Panc1 (cell line): ENCODE measurements at regions of chr15 and their contacts with region 1.

Region 1: DNA sequence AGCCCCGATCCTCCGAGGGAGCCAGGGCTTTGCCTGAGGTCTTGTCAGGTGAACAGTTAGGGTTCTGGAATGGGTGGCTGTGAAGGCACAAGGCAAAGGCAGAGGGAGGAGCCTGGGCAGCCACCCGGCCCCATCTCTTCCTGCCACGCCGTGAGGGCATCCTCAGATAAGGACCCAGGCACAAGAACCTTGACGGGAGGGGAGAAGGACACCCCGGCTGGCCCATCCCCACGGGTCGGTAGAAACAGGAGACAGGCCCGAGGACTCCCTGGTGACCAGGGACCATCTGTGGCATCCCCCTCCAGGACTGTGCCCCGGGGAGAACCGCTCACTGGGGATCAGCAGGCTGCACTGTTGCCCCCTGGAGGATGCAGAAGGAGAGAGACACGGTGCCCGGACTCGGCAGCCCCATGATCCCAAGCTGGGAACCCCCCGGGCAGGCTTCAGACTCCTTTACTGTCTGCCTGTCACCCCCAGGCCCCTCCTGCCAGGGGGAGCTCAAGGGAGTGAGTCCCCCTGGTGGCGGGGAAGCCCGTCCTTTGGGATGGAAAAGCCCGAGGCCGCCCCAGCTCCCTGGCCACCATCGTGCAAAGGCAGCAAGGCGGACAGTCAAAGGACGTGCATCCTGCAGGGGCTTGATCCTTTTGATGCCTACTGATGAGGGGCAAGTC is 12.3 kb upstream of the PCSK6 start:
- DNase-seq: no peak
- ATAC-seq: peak; percentile 94
- H3K4me3 ChIP-seq: peak overlapping the region in 1 of 2 experiments; percentile 5; a peak in 1 of 4 replicates
- H3K27ac ChIP-seq: no peak overlapping the region
- H3K4me1 ChIP-seq: no peaks in the 10 kb centered on the region
- H3K27me3 ChIP-seq: no peaks in the 10 kb centered on the region
- CTCF ChIP-seq: peak; percentile 90

Region 2: DNA sequence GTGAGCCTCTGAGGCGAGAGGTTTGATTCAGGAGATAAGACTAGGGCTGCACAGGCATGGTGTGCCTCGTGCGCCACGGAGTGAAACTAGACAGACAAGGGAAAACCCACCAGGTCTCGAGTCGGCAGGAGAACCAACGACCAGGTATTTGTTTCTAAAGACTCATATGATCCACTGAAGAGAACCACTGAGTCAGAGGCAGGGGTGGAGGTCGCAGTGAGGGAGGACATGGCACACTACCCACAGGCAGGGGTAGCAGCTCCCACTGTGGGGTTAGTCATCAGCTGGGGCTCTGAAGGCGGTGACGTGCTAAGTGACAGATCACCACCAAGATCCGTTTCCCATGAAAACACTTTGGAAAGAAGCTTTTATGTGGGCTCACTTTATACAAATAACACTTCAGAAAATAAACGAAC is 295.7 kb before region 1 on chr15:
- CTCF ChIA-PET with region 1: no interaction called
- POLR2A ChIA-PET with region 1: no interaction called
- in situ Hi-C with region 1: no loop called
- intact Hi-C with region 1: no loop called
- DNase-seq: no peak
- ATAC-seq: no peak
- H3K4me3 ChIP-seq: no peak overlapping the region
- H3K27ac ChIP-seq: peak overlapping the region; percentile 63
- H3K4me1 ChIP-seq: peaks cover 69% of the 10 kb centered on the region
- H3K27me3 ChIP-seq: no peaks in the 10 kb centered on the region
- CTCF ChIP-seq: no peak

Region 3: GRCh38 chr15:101303408-101303807 is 198.4 kb before region 1 on chr15:
- CTCF ChIA-PET with region 1: no interaction called
- POLR2A ChIA-PET with region 1: no interaction called
- in situ Hi-C with region 1: no loop called
- intact Hi-C with region 1: loop called (anchors 5 kb)
- DNase-seq: no peak
- ATAC-seq: no peak
- H3K4me3 ChIP-seq: no peak overlapping the region
- H3K27ac ChIP-seq: no peak overlapping the region
- H3K4me1 ChIP-seq: peaks cover 2% of the 10 kb centered on the region; the same call in 1 of the 2 replicates
- H3K27me3 ChIP-seq: no peaks in the 10 kb centered on the region
- CTCF ChIP-seq: no peak